GM10248 (cell line): ENCODE measurements at regions of chr15 and their contacts with region 1.

Region 1: GRCh38 chr15:81265944-81266775 is 57.8 kb downstream of the STARD5 start:
- DNase-seq: peak; percentile 79
- CTCF ChIP-seq: peak; percentile 97

Region 2: DNA sequence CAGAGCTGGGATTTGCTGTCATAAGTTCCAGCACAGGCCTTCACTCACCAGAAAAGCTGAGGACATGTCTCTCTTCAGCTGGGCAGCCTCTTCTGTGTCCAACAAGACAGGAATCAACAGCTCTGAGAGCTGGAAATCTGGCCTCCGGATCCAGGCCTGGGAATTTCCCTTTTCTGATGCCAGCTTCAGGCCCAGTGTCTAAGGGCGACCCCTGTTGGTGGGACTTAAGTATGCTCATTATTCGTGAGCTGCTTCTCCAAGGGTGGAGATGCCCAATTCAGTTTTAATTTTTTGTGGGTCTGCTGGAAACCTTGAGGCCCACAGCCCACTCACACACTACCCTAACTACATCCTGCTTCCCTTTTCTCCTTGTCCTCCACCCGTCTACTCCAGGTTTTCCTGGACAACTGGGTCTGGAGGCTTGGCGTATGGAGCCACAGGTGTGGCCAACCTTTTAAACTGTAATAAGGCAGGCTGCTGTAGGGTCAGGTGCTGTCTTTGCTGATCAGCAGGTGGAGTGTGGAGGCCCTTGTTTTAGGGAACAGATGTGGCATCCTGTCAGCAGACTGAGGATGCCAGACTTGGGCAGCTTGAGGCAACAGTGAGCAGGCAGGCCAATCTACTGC is 489.6 kb before region 1 on chr15:
- CTCF ChIA-PET with region 1: interaction called, 10 read pairs
- POLR2A ChIA-PET with region 1: no interaction called
- DNase-seq: peak; percentile 77
- CTCF ChIP-seq: peak; percentile 82

Region 3: GRCh38 chr15:81029414-81030300 is 236.5 kb before region 1 on chr15:
- CTCF ChIA-PET with region 1: interaction called, 21 read pairs
- POLR2A ChIA-PET with region 1: no interaction called
- DNase-seq: no peak
- CTCF ChIP-seq: no peak

Region 4: GRCh38 chr15:81133782-81134461 is 132.2 kb before region 1 on chr15 and contains the start of gene CFAP161:
- CTCF ChIA-PET with region 1: interaction called, 14 read pairs
- POLR2A ChIA-PET with region 1: no interaction called
- DNase-seq: peak; percentile 36
- CTCF ChIP-seq: no peak

Region 5: DNA sequence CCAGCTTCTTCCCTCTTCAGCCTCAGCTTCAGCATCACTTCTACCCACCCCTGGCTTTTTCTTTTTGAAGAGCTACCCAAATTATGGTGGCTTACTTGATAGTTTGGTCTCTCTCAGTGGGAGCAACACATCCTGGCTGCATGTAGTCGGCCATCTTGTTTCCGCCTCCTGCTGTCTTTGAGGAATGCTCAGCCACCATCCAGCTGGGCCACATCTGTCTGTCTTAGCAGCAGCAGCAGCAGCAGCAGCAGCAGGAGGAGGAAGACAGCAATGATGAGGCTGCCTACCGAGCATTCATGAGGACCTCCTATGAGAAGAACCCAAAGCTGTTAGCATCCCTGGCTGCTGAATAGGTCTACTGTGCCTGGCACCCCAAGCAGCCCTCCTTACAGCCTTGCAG is 49.7 kb before region 1 on chr15:
- CTCF ChIA-PET with region 1: interaction called, 10 read pairs
- POLR2A ChIA-PET with region 1: no interaction called
- DNase-seq: no peak
- CTCF ChIP-seq: no peak

Region 6: DNA sequence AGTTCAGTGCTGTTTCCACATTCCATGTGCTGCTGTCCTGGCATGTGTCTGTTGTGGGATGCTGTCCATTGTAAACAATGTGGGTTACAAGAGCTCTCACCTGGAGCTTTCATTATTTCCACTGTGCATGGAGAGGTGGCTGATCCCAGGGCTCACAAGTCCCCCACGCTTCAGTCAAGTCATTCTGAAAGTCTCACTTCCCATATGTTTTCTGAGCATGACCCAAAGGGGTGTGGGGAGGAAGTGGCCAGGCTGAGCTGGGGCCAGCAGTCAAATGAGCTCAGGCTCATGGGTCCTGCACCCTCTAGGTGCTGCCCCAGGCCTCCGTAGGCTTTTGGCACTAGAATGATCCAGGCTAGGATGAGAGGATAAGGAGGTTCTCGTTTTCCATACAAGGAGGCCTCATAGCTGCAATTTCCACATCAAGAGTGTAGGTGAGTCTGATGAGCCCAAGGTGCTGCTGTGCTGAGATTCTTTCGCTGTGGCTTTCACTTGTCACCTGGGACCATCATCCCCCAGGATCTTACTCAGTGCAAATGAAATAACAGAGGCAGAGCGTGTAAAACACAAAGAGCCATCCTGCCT is 35.7 kb after region 1 on chr15:
- CTCF ChIA-PET with region 1: interaction called, 41 read pairs
- POLR2A ChIA-PET with region 1: no interaction called
- DNase-seq: peak; percentile 63
- CTCF ChIP-seq: no peak

Region 7: GRCh38 chr15:81351651-81352050 is 85.5 kb after region 1 on chr15:
- CTCF ChIA-PET with region 1: interaction called, 22 read pairs
- POLR2A ChIA-PET with region 1: no interaction called
- DNase-seq: no peak
- CTCF ChIP-seq: no peak